ENCODE measurements at regions of chr15 and their contacts with region 1.

Region 1: DNA sequence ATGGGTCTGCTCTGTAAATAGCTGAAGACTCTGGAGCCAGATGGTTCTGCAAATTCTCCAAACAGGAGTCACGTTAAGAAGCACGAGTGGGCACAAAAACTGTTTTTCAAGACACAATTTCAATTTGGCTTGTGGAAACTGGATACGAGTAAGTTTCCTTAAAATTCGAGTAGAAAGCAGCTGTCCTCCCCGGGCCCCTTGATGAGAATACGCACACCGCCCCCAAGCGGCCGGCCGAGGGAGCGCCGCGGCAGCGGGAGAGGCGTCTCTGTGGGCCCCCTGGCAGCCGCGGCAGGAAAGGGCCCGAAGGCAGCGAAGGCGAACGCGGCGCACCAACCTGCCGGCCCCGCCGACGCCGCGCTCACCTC is 778 bp upstream of the THBS1 start:
- DNase-seq: peak; percentile 97
- H3K4me3 Mint-ChIP-seq: peak overlapping the region; percentile 65
- H3K27ac Mint-ChIP-seq: no peak overlapping the region
- H3K4me1 Mint-ChIP-seq: peaks cover 27% of the 10 kb centered on the region
- H3K27me3 Mint-ChIP-seq: peaks cover 64% of the 10 kb centered on the region

Region 2: GRCh38 chr15:38707802-38708671 is 872.1 kb before region 1 on chr15:
- intact Hi-C with region 1: loop called (anchors 5 kb)
- DNase-seq: peak; percentile 84
- H3K4me3 Mint-ChIP-seq: no peak overlapping the region
- H3K27ac Mint-ChIP-seq: no peak overlapping the region
- H3K4me1 Mint-ChIP-seq: peaks cover 13% of the 10 kb centered on the region
- H3K27me3 Mint-ChIP-seq: peaks cover 17% of the 10 kb centered on the region

Region 3: GRCh38 chr15:38817427-38818156 is 762.5 kb before region 1 on chr15:
- intact Hi-C with region 1: loop called (anchors 1 kb)
- DNase-seq: peak; percentile 95
- H3K4me3 Mint-ChIP-seq: no peak overlapping the region
- H3K27ac Mint-ChIP-seq: no peak overlapping the region
- H3K4me1 Mint-ChIP-seq: peaks cover 4% of the 10 kb centered on the region
- H3K27me3 Mint-ChIP-seq: peaks cover 5% of the 10 kb centered on the region

Region 4: GRCh38 chr15:39125904-39126303 is 454.2 kb before region 1 on chr15:
- intact Hi-C with region 1: loop called (anchors 2 kb)
- DNase-seq: peak; percentile 78
- H3K4me3 Mint-ChIP-seq: no peak overlapping the region
- H3K27ac Mint-ChIP-seq: no peak overlapping the region
- H3K4me1 Mint-ChIP-seq: peaks cover 19% of the 10 kb centered on the region
- H3K27me3 Mint-ChIP-seq: peaks cover 11% of the 10 kb centered on the region

Region 5: DNA sequence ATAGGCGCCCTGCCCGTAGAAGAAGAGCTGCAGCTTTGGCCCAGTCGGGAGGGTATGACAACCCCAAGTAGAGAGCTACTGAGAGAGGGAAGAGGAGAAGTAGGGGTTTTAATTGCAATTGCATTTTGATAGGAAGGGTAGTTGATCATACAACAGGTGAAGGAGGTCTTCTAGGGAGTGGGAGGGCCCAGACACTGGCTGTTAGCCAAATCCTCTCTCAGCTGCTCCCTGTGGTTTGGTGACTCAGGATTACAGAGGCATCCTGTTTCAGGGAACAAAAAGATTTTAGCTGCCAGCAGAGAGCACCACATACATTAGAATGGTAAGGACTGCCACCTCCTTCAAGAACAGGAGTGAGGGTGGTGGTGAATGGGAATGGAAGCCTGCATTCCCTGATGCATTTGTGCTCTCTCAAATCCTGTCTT is 408.1 kb before region 1 on chr15:
- intact Hi-C with region 1: loop called (anchors 1 kb)
- DNase-seq: peak; percentile 65
- H3K4me3 Mint-ChIP-seq: no peak overlapping the region
- H3K27ac Mint-ChIP-seq: no peak overlapping the region
- H3K4me1 Mint-ChIP-seq: peaks cover 9% of the 10 kb centered on the region
- H3K27me3 Mint-ChIP-seq: peaks cover 36% of the 10 kb centered on the region

Region 6: GRCh38 chr15:39624806-39625205 is 44.7 kb after region 1 on chr15:
- intact Hi-C with region 1: loop called (anchors 1 kb)
- DNase-seq: peak; percentile 90
- H3K4me3 Mint-ChIP-seq: peak overlapping the region; percentile 76
- H3K27ac Mint-ChIP-seq: peak overlapping the region; percentile 99
- H3K4me1 Mint-ChIP-seq: peaks cover 76% of the 10 kb centered on the region
- H3K27me3 Mint-ChIP-seq: no peaks in the 10 kb centered on the region

Region 7: GRCh38 chr15:39680868-39681267 is 100.8 kb after region 1 on chr15:
- intact Hi-C with region 1: no loop called
- DNase-seq: no peak
- H3K4me3 Mint-ChIP-seq: no peak overlapping the region
- H3K27ac Mint-ChIP-seq: no peak overlapping the region
- H3K4me1 Mint-ChIP-seq: no peaks in the 10 kb centered on the region
- H3K27me3 Mint-ChIP-seq: peaks cover 9% of the 10 kb centered on the region

Region 8: DNA sequence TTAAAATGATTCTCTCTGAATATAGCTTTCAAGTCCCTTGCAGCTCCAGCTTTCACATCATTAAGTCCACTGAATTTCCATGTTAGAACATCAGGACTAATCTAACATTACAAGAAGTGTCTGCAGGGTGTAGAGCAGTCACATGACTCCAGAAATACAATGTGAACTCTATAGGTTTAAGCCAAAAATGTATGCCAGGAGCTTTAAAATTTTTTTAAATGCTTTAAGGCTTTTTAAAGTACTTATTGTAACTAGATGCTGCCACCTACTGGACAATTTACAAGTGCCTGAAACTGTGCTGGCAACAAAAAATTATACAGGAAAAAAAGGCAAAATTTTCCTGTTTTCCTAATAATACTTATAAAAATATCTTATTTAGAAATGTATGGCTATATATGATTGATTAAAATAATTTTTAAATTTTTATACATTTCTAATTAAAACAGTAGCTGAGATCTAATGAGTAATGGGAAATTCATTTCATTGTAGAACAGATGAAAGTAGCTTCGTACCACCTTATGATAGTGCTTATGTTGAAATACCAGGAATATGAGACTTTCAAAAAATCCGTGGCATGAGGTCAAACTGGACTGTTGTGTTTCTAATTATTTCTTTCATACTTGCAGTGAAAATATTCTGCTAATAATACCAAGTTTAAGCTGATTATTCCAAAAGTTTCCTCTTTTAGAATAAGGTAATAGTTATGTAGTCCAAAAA is 176.9 kb after region 1 on chr15:
- intact Hi-C with region 1: loop called (anchors 1 kb)
- DNase-seq: peak; percentile 75
- H3K4me3 Mint-ChIP-seq: no peak overlapping the region
- H3K27ac Mint-ChIP-seq: no peak overlapping the region
- H3K4me1 Mint-ChIP-seq: no peaks in the 10 kb centered on the region
- H3K27me3 Mint-ChIP-seq: peaks cover 49% of the 10 kb centered on the region